ENCODE measurements at regions of chr6 and their contacts with region 1.

Region 1: DNA sequence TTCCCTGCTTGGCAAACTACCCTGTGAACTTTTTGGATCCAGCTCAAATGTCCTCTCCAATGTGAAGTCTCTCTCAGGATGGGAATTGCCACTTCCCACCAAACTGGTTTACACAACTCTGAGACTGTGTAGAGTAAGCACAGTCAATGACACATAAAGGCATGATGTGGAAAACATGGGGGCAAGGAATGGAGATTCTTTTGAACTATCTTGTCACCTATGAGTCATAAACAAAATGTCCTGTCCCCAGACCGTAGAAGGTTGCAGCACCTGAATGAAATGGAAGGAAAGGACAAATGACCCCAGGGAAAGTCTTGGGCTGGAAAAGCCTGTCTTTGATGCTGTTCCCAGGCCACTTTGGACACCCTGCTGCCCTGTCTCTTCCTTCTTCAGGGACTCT is 11.0 kb upstream of the KIF13A start:
- DNase-seq: peak in 2 of 3 donors; percentile 38 to 74
- H3K4me3 ChIP-seq: no peak overlapping the region
- H3K4me3 Mint-ChIP-seq: no peak overlapping the region
- H3K27ac ChIP-seq: no peak overlapping the region
- H3K27ac Mint-ChIP-seq: peak overlapping the region in 2 of 7 donors; percentile 53 to 74
- H3K4me1 ChIP-seq: peaks cover 17 to 27% of the 10 kb centered on the region in 2 donors
- H3K4me1 Mint-ChIP-seq: peaks cover 27% of the 10 kb centered on the region
- H3K27me3 ChIP-seq: no peaks in the 10 kb centered on the region
- H3K27me3 Mint-ChIP-seq: peaks cover 6 to 8% (median 6%) of the 10 kb centered on the region in 3 donors
- CTCF ChIP-seq: no peak

Region 2: GRCh38 chr6:17907406-17908229 is 90.8 kb before region 1 on chr6:
- intact Hi-C with region 1: loop called in 1 of 2 experiments (anchors 10 kb)
- DNase-seq: peak; percentile 96 to 98 (median 98)
- H3K4me3 ChIP-seq: peak overlapping the region in 2 of 3 experiments; percentile 47 to 67
- H3K4me3 Mint-ChIP-seq: peak overlapping the region; percentile 61 to 92
- H3K27ac ChIP-seq: peak overlapping the region; percentile 88 to 93
- H3K27ac Mint-ChIP-seq: peak overlapping the region; percentile 92 to 99 (median 98)
- H3K4me1 ChIP-seq: peaks cover 49 to 64% of the 10 kb centered on the region in 2 donors
- H3K4me1 Mint-ChIP-seq: peaks cover 70% of the 10 kb centered on the region
- H3K27me3 ChIP-seq: no peaks in the 10 kb centered on the region
- H3K27me3 Mint-ChIP-seq: peaks cover 0 to 2% (median 0%) of the 10 kb centered on the region in 3 donors
- CTCF ChIP-seq: peak; percentile 39

Region 3: GRCh38 chr6:18242062-18242851 is 243.8 kb after region 1 on chr6:
- intact Hi-C with region 1: no loop called
- DNase-seq: peak in 1 of 3 donors; percentile 66
- H3K4me3 ChIP-seq: no peak overlapping the region
- H3K4me3 Mint-ChIP-seq: no peak overlapping the region
- H3K27ac ChIP-seq: peak overlapping the region in 1 of 2 donors; percentile 37
- H3K27ac Mint-ChIP-seq: peak overlapping the region in 2 of 7 donors; percentile 52 to 69
- H3K4me1 ChIP-seq: no peaks in the 10 kb centered on the region
- H3K4me1 Mint-ChIP-seq: no peaks in the 10 kb centered on the region
- H3K27me3 ChIP-seq: no peaks in the 10 kb centered on the region
- H3K27me3 Mint-ChIP-seq: no peaks in the 10 kb centered on the region
- CTCF ChIP-seq: no peak